Activated T-helper 1 cell treated with anti-CD3 and anti-CD28 coated beads, Interleukin-12 subunit alpha, Interleukin-12 subunit beta, Interleukin-2, Interleukin-4 antibody, amounts not matched to agents 30 ng/mL and 10 ng/mL and 1 ng/mL, durations not matched to agents 14 hours and 24 hours and 36 hours (primary cell): ENCODE measurements at regions of chr5 and their contacts with region 1.

Region 1: GRCh38 chr5:112707187-112708102 is 30.2 kb upstream of the APC start:
- DNase-seq: peak; percentile 96
- H3K4me3 Mint-ChIP-seq: peak overlapping the region; percentile 94
- H3K27ac Mint-ChIP-seq: peak overlapping the region; percentile 81
- H3K4me1 Mint-ChIP-seq: peaks cover 37% of the 10 kb centered on the region
- H3K27me3 Mint-ChIP-seq: peaks cover 8% of the 10 kb centered on the region

Region 2: GRCh38 chr5:111022301-111022700 is 1685.1 kb before region 1 on chr5:
- intact Hi-C with region 1: no loop called
- DNase-seq: no peak
- H3K4me3 Mint-ChIP-seq: no peak overlapping the region
- H3K27ac Mint-ChIP-seq: no peak overlapping the region
- H3K4me1 Mint-ChIP-seq: no peaks in the 10 kb centered on the region
- H3K27me3 Mint-ChIP-seq: peaks cover 2% of the 10 kb centered on the region

Region 3: GRCh38 chr5:112737463-112738190 is 30.2 kb after region 1 on chr5 and contains the start of gene APC:
- intact Hi-C with region 1: loop called (anchors 1 kb)
- DNase-seq: peak; percentile 72
- H3K4me3 Mint-ChIP-seq: peak within 1 kb of the TSS; percentile 89
- H3K27ac Mint-ChIP-seq: peak within 1 kb of the TSS; percentile 19
- H3K4me1 Mint-ChIP-seq: peaks cover 17% of the 10 kb centered on the region
- H3K27me3 Mint-ChIP-seq: peaks cover 2% of the 10 kb centered on the region
- total RNA-seq, gene APC: 20.3 and 24.4 TPM in 2 replicates

Region 4: GRCh38 chr5:112860929-112861637 is 153.6 kb after region 1 on chr5 and contains the start of gene SRP19:
- intact Hi-C with region 1: loop called (anchors 1 kb)
- DNase-seq: peak; percentile 89
- H3K4me3 Mint-ChIP-seq: peak within 1 kb of the TSS; percentile 97
- H3K27ac Mint-ChIP-seq: peak within 1 kb of the TSS; percentile 96
- H3K4me1 Mint-ChIP-seq: peaks cover 27% of the 10 kb centered on the region
- H3K27me3 Mint-ChIP-seq: peaks cover 12% of the 10 kb centered on the region
- total RNA-seq, gene SRP19: 72.0 and 72.5 TPM in 2 replicates

Region 5: DNA sequence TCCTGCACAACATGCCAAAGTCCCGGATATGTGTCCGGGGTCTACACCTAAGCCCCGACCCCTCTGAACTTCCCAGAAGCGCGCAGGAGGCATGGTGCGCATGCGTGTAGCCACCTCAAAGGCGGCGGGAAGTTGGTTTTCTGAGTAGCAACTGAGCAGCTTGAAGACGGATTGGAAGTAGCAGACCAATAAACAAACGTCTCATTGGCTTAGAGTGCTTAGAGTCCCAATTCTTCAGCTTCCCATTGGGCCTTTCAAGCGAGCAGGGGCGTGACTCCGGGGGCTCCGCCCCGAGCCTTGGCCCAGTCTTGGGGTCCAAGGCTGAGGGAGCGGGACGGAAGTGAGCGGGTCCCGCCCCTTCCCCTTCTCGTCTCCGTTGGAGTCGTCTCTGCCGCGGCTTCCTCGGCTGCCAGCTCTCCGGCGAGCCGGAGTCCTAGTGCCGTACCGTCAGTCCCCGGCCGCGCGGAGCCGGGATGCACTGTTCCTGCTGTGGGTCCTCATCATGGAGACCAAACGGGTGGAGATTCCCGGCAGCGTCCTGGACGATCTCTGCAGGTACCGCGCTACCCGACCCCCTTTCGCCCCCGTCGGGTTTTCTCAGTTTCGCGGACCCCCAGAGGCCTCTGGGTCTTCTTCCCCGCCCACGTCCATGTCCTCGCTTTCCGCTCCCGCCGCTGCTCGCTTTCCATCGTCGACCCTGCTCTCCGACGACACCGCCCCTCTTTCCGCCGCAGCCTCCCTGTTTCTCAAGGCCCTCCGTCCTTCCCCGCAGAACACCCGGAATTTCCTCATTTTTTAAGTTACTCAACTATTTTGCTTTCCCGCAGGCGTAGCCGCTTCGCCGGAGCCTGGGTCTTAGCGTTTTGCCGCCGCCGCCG is 269.2 kb after region 1 on chr5 and contains the start of gene DCP2:
- intact Hi-C with region 1: loop called (anchors 1 kb)
- DNase-seq: peak; percentile 96
- H3K4me3 Mint-ChIP-seq: peak within 1 kb of the TSS; percentile 93
- H3K27ac Mint-ChIP-seq: peak within 1 kb of the TSS; percentile 93
- H3K4me1 Mint-ChIP-seq: peaks cover 32% of the 10 kb centered on the region
- H3K27me3 Mint-ChIP-seq: no peaks in the 10 kb centered on the region
- total RNA-seq, gene DCP2: 78.9 and 82.5 TPM in 2 replicates